ENCODE measurements at regions of chr21 and their contacts with region 1.

Region 1: DNA sequence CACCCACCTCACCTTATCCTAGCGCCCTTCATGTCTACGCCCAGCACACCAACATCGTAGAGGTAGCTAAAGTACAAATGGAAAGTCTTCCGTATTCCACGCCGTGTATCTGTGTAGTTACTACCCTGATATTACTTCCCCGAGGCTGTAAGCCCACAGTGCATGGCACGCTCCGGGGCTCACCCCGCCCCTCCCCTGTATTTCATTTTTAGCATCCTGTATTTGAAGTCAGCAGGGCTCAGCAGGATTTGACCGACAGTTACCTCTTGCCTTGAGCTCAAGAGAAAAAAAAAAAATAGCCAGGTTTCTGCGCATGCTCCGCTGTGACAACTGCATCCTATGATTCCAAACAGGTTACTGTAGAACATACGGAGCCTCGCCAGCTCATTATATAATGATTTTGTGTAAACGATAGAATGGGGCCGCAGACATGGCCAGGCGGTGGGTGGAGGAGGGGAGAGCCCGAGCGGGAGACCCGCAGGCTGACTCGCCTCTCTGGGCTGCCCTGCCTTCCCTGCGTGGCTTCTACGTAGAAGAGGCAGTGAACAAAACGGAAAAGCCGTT is 1.3 kb downstream of the ABCG1 start:
- DNase-seq: peak; percentile 58 to 95 (median 93)
- ATAC-seq: peak; percentile 93
- H3K4me3 ChIP-seq: peak overlapping the region; percentile 69
- H3K4me3 Mint-ChIP-seq: peak overlapping the region; percentile 85 to 99 (median 93)
- H3K27ac ChIP-seq: peak overlapping the region; percentile 81
- H3K27ac Mint-ChIP-seq: peak overlapping the region; percentile 71 to 99 (median 91)
- H3K4me1 ChIP-seq: peaks cover 5 to 13% of the 10 kb centered on the region in 2 donors
- H3K4me1 Mint-ChIP-seq: peaks cover 21 to 44% (median 36%) of the 10 kb centered on the region in 7 donors
- H3K27me3 ChIP-seq: no peaks in the 10 kb centered on the region
- H3K27me3 Mint-ChIP-seq: peaks cover 0 to 3% (median 0%) of the 10 kb centered on the region in 5 donors

Region 2: DNA sequence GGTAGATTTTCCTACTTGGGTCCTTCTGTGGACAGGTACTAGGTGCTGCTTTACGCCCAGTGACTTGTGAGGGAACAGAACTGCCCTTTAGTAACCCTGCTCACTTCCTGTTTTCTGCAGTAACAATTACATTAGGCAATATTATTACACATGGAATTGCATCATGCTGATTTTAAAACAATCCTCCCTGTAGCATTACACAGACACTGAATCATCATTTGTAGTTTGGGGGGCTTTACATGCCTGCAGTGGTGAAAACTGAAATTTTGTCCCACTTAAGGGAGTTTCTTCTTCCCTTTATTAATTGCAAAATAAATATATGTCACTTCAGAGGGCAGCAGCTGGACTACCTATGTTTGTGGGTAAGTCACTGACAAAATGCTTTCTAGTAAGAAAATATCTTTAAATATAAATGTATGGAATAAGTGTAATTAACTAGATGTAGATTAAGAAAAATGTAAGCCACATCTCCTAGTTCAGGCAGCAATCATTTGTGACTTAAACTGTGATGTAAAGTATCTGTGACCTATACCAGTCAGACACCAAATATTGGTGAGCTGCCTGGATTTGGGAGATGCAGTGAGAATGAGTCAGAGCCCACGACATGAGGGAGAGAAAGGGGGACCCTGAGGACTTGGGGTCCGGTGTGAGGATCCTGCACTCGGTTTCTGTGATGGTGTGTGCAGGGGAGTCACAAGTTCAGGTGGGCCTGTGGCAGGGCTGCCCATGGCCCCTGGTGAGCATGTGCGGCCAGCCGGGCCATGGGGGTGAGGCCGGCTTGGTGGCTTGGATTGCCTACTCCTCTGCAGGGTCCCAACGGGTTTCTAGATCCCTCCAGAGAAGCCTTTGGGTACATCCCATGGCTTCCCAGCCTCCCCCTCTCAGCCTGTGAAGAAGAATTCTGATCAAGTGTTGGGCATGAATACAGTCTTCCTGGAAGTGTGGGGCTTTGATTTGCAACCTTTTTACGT is 20.4 kb before region 1 on chr21:
- CTCF ChIA-PET with region 1: no interaction called
- POLR2A ChIA-PET with region 1: interaction called, 4 read pairs
- intact Hi-C with region 1: loop called in 1 of 2 experiments (anchors 2 kb)
- DNase-seq: peak in 7 of 9 donors; percentile 33 to 64 (median 49)
- ATAC-seq: peak; percentile 86
- H3K4me3 ChIP-seq: no peak overlapping the region
- H3K4me3 Mint-ChIP-seq: peak overlapping the region; percentile 34 to 73 (median 66)
- H3K27ac ChIP-seq: peak overlapping the region; percentile 38
- H3K27ac Mint-ChIP-seq: peak overlapping the region; percentile 13 to 95 (median 87)
- H3K4me1 ChIP-seq: peaks cover 25 to 39% of the 10 kb centered on the region in 2 donors
- H3K4me1 Mint-ChIP-seq: peaks cover 37 to 85% (median 75%) of the 10 kb centered on the region in 7 donors
- H3K27me3 ChIP-seq: no peaks in the 10 kb centered on the region
- H3K27me3 Mint-ChIP-seq: peaks cover 0 to 16% (median 0%) of the 10 kb centered on the region in 5 donors

Region 3: GRCh38 chr21:42238185-42238934 is 18.1 kb after region 1 on chr21:
- CTCF ChIA-PET with region 1: interaction called, 5 read pairs
- POLR2A ChIA-PET with region 1: interaction called, 30 read pairs
- intact Hi-C with region 1: loop called (anchors 1 kb)
- DNase-seq: peak in 7 of 9 donors; percentile 59 to 82 (median 76)
- ATAC-seq: peak; percentile 44
- H3K4me3 ChIP-seq: no peak overlapping the region
- H3K4me3 Mint-ChIP-seq: peak overlapping the region; percentile 58 to 86 (median 74)
- H3K27ac ChIP-seq: peak overlapping the region; percentile 48
- H3K27ac Mint-ChIP-seq: peak overlapping the region; percentile 52 to 99 (median 83)
- H3K4me1 ChIP-seq: peaks cover 58 to 61% of the 10 kb centered on the region in 2 donors
- H3K4me1 Mint-ChIP-seq: peaks cover 52 to 80% (median 63%) of the 10 kb centered on the region in 7 donors
- H3K27me3 ChIP-seq: no peaks in the 10 kb centered on the region
- H3K27me3 Mint-ChIP-seq: no peaks in the 10 kb centered on the region